Posterior vena cava (tissue), 2 donors: ENCODE measurements at regions of chr7 and their contacts with region 1.

Region 1: DNA sequence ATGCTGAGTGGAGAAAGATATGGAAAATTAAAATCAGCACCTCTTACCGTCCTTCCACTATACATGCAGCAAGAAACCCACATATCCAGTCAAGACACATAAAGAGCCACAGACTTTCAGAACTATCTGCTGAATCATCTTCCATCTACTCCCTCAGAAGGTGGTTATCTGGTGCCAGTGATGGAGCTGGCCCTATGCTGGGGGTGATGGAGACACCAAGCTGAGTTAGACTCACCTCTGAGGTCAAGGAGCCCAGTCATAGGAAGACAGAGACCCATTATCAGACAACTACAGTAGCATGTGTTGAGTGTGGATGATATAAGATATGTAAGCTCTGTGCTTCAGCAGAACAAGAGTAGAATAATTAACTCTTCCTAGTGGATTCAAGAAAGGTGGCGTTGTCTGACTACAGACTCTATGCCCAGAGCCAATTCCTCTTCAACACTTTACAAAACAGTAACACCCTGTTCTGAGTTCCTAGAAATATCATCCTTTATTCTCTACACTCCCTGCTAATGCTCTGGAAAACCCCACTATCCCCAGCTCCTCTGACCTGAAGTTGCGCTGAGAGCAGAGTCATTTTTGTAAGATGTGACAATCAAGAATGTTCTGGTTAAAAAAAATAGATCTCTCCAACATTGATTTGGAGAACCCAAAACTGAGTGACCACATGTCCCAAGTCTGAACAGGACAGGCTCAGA is 14.3 kb downstream of the CYP3A5 start:
- DNase-seq: no peak

Region 2: GRCh38 chr7:99868246-99868645 is 202.8 kb after region 1 on chr7:
- intact Hi-C with region 1: loop called in 1 of 2 experiments (anchors 5 kb)
- DNase-seq: no peak